Posterior cingulate gyrus (tissue), 11 donors: ENCODE measurements at regions of chr1 and their contacts with region 1.

Region 1: GRCh38 chr1:53945433-53946251 is at the start of gene IFT25:
- DNase-seq: peak; percentile 93 to 100 (median 98)

Region 2: DNA sequence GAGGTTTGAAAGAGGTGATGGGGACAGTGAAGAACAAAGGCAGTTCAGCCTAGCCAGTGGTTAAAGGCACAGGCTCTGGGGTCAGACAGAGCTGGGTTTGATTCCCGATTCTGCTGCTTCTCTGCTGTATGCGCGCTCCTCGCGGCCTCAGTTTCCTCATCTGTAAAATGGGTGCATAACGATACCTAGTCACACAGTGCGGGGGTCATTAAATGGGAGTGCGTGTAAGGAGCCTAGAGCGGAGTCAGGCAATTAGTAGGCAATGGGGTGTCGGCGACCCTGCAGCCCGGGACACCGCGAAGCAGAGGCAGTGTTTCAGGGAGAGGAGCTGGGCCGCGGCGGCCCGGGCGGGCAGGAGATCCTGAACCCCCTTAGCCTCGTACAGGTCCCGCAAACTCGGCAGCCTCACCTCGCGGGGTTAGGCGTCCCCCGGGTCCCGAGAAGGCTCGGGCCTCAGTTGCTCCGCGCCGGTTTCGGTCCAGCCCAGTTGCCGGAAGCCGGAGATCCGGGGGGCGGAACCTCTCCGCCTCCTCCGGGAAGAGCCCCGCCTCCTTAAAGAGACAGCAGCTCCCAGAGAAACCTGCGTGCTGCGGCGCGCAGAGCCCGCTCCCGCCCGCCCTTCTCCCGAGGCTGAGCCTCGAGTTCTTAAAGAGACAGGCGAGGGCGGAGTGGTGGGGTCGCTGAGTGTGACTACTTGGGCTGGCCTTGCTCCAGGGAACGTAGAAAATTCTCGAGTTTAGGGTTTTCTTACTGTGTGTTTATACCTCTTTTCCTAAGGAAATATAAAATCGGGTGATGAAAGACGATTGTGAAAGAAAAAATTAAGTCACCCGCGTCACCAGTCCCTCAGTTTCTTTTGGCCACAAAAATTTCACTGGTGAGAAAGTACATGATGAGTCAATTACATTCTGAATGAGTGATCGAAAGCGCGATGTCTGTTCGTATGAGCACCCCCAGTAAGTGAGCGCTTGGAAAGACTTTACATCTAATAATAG is 56.0 kb before region 1 on chr1 and contains the start of gene YIPF1:
- intact Hi-C with region 1: loop called (anchors 1 kb)
- DNase-seq: peak; percentile 86 to 99 (median 93)

Region 3: DNA sequence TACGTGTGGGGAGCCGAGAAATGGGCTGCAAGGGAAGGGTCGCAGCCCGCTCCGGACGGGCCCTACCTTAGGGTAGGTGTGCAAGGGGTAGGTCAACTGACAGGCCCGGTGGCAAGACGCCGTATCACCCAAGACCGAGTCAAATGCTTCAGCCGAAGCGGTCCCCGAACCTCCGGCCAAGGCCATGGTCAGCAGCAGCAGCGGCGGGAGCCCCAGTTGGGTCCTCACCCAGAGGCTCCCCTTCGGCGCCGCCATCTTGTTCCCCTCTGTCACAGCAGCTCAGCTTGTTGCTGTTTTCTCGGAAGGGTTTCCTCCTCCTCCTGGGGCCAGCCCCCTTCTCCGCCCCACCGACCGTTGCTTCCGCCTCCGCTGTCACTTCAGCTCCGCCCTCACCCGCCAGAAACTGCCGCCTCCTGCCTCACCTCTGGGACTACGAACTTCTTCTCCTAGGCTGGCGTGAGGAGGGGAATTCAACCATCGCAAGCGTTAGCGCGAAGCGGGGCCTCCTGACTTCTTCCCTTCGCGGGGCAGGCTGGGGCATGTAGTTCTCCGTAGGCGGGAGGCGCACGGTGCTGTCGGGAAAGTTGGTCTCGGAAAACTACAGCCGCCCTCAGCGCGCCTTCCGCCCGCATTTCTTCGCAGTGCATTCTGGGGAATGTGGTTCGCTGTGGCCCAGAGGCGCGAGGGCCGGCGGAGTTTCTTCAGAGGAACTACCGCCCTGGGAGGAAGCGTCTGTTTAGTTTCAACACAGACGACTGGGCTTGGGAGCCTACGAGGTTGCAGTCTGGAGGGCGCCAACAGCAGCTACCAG is 107.5 kb after region 1 on chr1 and contains the starts of genes TCEANC2 and TMEM59:
- intact Hi-C with region 1: loop called (anchors 5 kb)
- DNase-seq: peak; percentile 97 to 100 (median 98)